ENCODE measurements at regions of chr17 and their contacts with region 1.

Region 1: GRCh38 chr17:74864866-74865395 is 5.2 kb upstream of the GRIN2C start:
- DNase-seq: peak; percentile 93
- H3K4me3 ChIP-seq: no peak overlapping the region; a peak in 1 of 4 replicates
- H3K27ac ChIP-seq: no peak overlapping the region
- H3K4me1 ChIP-seq: peaks cover 0 to 10% of the 10 kb centered on the region in 2 experiments; a peak in 2 of 4 replicates
- H3K27me3 ChIP-seq: peaks cover 18% of the 10 kb centered on the region
- CTCF ChIP-seq: peak; percentile 99
- EP300 ChIP-seq: no peak
- RAD21 ChIP-seq: peak; percentile 99

Region 2: DNA sequence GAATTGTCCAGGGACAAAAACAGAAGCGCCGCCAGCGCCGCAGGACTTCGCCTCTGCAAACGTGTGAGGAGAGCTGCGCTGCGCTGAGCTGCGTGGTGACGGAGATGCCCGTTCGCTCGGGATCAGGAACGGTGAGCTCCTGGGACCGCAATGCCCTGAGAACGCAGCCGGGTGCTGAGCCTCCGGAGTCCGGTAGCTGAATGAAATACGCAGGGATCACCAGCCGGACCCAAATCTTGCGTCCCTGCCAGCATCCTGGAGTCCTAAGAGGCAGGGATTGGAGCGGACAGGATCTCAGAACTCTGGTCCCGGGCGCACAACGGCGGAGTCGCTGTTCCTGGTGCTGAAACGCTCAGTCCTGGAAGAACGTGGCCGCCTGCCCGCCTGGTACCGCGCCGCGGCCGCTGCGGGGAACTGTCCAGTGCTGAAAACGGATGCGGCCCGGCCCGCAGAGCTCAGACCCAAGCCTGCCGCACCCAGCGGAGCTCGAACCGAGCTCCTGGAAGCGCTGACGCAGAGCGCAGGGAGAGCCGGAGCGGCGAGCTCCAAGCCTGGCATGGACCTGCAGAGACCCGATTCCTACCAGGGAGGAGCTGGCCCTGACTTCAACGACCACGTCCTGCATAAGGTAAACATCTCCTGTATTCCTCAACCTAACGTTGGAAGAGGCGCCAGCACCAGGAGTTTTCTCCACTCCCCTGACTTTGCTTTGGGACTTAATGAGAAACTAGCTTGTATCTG is 193.7 kb before region 1 on chr17:
- CTCF ChIA-PET with region 1: interaction called, 11 read pairs
- POLR2A ChIA-PET with region 1: no interaction called
- DNase-seq: peak; percentile 67
- H3K4me3 ChIP-seq: no peak overlapping the region
- H3K27ac ChIP-seq: no peak overlapping the region
- H3K4me1 ChIP-seq: peaks cover 0 to 6% of the 10 kb centered on the region in 2 experiments; a peak in 1 of 4 replicates
- H3K27me3 ChIP-seq: no peaks in the 10 kb centered on the region
- CTCF ChIP-seq: no peak
- EP300 ChIP-seq: no peak
- RAD21 ChIP-seq: no peak

Region 3: GRCh38 chr17:74742153-74742515 is 122.8 kb before region 1 on chr17:
- CTCF ChIA-PET with region 1: interaction called, 191 read pairs
- POLR2A ChIA-PET with region 1: no interaction called
- DNase-seq: no peak
- H3K4me3 ChIP-seq: no peak overlapping the region
- H3K27ac ChIP-seq: no peak overlapping the region
- H3K4me1 ChIP-seq: peaks cover 0 to 3% of the 10 kb centered on the region in 2 experiments; a peak in 1 of 4 replicates
- H3K27me3 ChIP-seq: peaks cover 22% of the 10 kb centered on the region
- CTCF ChIP-seq: no peak
- EP300 ChIP-seq: no peak
- RAD21 ChIP-seq: no peak

Region 4: DNA sequence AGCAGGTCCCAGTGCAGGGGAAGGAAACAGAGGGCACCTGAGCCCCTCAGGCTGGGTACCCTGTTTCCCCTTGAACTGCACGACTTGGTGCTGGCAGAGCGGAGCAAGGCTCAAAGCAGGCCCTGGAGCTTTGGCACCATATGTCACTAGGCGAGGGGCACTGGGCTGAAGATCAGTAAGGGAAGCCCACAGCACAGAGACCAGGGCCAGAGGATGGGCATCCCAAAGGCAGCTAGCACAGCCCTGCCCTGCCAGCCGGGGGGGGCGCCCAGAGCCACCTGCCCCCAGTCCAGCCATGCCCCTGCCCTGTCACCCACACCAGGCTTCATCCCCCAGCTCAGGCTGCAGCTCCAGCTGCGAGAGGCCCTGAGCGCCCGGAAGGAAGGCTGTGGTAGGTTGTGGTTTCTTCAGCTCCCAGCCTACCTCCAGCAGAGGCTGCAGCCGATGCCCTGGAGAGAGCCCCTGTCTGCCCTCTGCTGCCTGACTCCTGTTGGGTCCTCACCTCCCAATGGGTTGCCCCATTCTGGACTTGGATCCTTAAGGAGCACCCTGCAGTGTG is 105.6 kb before region 1 on chr17:
- CTCF ChIA-PET with region 1: interaction called, 15 read pairs
- POLR2A ChIA-PET with region 1: no interaction called
- DNase-seq: peak; percentile 38
- H3K4me3 ChIP-seq: no peak overlapping the region
- H3K27ac ChIP-seq: peak overlapping the region in 1 of 2 experiments; percentile 94; a peak in 2 of 4 replicates
- H3K4me1 ChIP-seq: peaks cover 45 to 68% of the 10 kb centered on the region in 2 experiments; a peak in 3 of 4 replicates
- H3K27me3 ChIP-seq: no peaks in the 10 kb centered on the region
- CTCF ChIP-seq: no peak
- EP300 ChIP-seq: no peak
- RAD21 ChIP-seq: no peak

Region 5: GRCh38 chr17:74892974-74893911 is 28.3 kb after region 1 on chr17 and contains the start of gene FADS6:
- CTCF ChIA-PET with region 1: interaction called, 15 read pairs
- POLR2A ChIA-PET with region 1: no interaction called
- DNase-seq: peak; percentile 81
- H3K4me3 ChIP-seq: peak within 1 kb of the TSS; percentile 18 to 43; a peak in 3 of 4 replicates
- H3K27ac ChIP-seq: no peak within 1 kb of the TSS
- H3K4me1 ChIP-seq: peaks cover 0 to 6% of the 10 kb centered on the region in 2 experiments; a peak in 1 of 4 replicates
- H3K27me3 ChIP-seq: peaks cover 77% of the 10 kb centered on the region
- CTCF ChIP-seq: no peak
- EP300 ChIP-seq: no peak
- RAD21 ChIP-seq: no peak
- polyA plus RNA-seq, gene FADS6: not detected in 2 replicates

Region 6: DNA sequence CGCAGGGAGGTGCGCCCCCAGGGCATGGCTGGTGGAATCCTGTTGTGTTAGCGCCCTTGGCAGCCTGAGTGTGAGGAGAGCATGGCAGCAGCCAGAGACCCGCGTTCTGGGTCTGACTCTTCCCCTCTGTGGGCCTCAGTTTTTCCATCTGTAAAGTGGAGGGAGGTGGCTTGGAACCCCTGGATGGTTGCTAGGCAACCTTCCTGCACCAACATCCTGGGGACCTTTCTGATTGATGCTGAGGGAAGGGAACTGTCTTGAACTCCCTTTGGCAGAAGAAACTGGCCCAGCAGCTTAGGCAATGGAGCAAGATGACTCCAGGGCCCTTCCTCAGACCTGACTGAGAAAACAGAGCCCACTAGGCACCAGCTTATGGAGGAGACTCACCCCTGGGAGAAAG is 50.2 kb after region 1 on chr17:
- CTCF ChIA-PET with region 1: no interaction called
- POLR2A ChIA-PET with region 1: no interaction called
- DNase-seq: no peak
- H3K4me3 ChIP-seq: no peak overlapping the region
- H3K27ac ChIP-seq: no peak overlapping the region
- H3K4me1 ChIP-seq: no peaks in the 10 kb centered on the region
- H3K27me3 ChIP-seq: no peaks in the 10 kb centered on the region; the same call in 1 of the 2 replicates
- CTCF ChIP-seq: no peak
- EP300 ChIP-seq: no peak
- RAD21 ChIP-seq: no peak

Region 7: DNA sequence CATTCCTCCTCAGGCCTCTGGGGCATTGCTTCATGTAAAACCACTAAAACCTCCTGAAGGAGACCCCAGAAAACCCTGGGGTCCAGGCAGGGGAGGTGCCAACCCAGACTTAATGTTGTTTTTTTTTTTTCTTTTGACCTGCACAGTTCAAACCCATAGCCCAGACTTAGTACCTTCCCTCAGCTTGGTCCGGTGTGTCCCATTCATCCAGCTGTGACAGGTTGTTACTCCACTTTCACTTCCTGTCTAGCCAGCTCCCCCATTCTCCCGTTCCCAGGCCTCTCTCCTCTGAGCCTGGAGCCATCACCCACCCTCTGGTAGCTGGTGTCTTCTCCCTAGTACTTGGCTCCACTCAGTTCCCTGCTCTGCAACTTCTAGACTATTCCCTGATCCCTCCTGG is 127.3 kb after region 1 on chr17:
- CTCF ChIA-PET with region 1: no interaction called
- POLR2A ChIA-PET with region 1: no interaction called
- DNase-seq: no peak
- H3K4me3 ChIP-seq: no peak overlapping the region
- H3K27ac ChIP-seq: no peak overlapping the region; a peak in 1 of 4 replicates
- H3K4me1 ChIP-seq: peaks cover 6 to 31% of the 10 kb centered on the region in 2 experiments; a peak in 2 of 4 replicates
- H3K27me3 ChIP-seq: no peaks in the 10 kb centered on the region
- CTCF ChIP-seq: no peak
- EP300 ChIP-seq: no peak
- RAD21 ChIP-seq: no peak

Region 8: DNA sequence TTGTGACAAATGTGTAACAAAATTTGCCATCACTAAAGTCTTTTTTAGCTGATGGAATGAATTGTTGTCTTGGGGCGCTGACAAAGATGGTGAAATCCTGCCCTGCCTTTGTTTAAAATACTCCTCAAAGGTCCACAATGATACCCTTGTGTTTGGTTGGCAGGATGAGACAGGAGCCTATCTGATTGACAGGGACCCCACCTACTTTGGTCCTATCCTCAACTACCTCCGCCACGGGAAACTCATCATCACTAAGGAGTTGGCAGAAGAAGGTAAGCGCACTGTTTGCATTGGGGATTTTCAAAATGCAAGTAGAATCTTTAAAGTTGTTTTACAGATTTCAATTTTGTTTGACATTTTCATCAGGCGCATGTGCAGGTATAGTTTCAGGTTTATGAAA is 184.1 kb after region 1 on chr17:
- CTCF ChIA-PET with region 1: no interaction called
- POLR2A ChIA-PET with region 1: no interaction called
- DNase-seq: no peak
- H3K4me3 ChIP-seq: no peak overlapping the region; a peak in 1 of 4 replicates
- H3K27ac ChIP-seq: no peak overlapping the region
- H3K4me1 ChIP-seq: peaks cover 7 to 15% of the 10 kb centered on the region in 2 experiments; a peak in 2 of 4 replicates
- H3K27me3 ChIP-seq: no peaks in the 10 kb centered on the region
- CTCF ChIP-seq: no peak
- EP300 ChIP-seq: no peak
- RAD21 ChIP-seq: no peak

Region 9: GRCh38 chr17:75154195-75155106 is 289.5 kb after region 1 on chr17 and contains the start of gene JPT1:
- CTCF ChIA-PET with region 1: no interaction called
- POLR2A ChIA-PET with region 1: no interaction called
- DNase-seq: peak; percentile 99
- H3K4me3 ChIP-seq: peak within 1 kb of the TSS; percentile 73 to 77
- H3K27ac ChIP-seq: peak within 1 kb of the TSS; percentile 53 to 85
- H3K4me1 ChIP-seq: peaks cover 5 to 8% of the 10 kb centered on the region in 2 experiments; a peak in 3 of 4 replicates
- H3K27me3 ChIP-seq: no peaks in the 10 kb centered on the region
- CTCF ChIP-seq: no peak
- EP300 ChIP-seq: no peak
- RAD21 ChIP-seq: no peak
- polyA plus RNA-seq, gene JPT1: 259 and 490 TPM in 2 replicates